ENCODE measurements at regions of chr19 and their contacts with region 1.

Region 1: GRCh38 chr19:52601025-52601973 is 31.2 kb downstream of the ZNF701 start:
- DNase-seq: peak; percentile 96
- ATAC-seq: peak; percentile 97 to 100 (median 98)
- H3K4me3 ChIP-seq: peak overlapping the region; percentile 76
- H3K27ac ChIP-seq: peak overlapping the region; percentile 38
- H3K4me1 ChIP-seq: peaks cover 5% of the 10 kb centered on the region
- H3K27me3 ChIP-seq: peaks cover 0 to 2% (median 0%) of the 10 kb centered on the region in 3 donors
- CTCF ChIP-seq: peak; percentile 44

Region 2: DNA sequence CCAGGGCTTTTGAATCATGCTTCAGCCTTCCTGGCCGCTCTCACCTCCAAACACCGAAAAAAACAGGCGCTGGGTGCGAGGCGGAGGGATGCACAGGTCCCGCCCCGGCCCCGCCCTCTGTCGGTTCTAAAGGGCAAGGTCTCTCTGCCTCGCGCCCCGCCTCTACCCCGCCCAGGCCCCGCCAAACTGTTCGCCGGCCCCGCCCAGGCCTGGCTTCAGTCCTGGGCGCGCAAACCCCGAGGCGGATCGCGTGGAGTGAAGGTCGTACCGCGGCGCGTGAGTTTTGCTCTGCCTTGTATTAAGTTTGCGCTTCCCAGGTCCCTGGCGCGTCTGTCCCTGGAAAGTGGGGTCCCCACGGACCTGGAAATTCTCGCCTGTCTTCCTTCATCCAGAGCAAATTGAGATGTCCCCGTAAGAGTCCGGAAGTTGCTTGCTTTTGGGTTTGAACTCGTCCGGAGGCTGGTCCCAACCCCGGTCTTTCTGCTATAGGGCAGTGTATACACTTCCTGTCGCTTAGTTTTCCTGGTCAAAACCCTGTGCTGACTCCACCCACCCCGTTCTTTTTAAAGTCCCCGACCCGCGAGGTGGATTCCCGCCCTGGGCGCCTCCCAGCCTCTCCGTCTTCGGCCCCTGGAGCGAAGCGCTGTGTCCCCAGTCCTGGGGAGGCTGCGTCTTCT is 65.4 kb before region 1 on chr19:
- intact Hi-C with region 1: loop called in 1 of 2 experiments (anchors 5 kb)
- DNase-seq: peak; percentile 91 to 93
- ATAC-seq: peak; percentile 90 to 93 (median 92)
- H3K4me3 ChIP-seq: peak overlapping the region; percentile 62
- H3K27ac ChIP-seq: peak overlapping the region; percentile 70
- H3K4me1 ChIP-seq: peaks cover 12% of the 10 kb centered on the region
- H3K27me3 ChIP-seq: no peaks in the 10 kb centered on the region
- CTCF ChIP-seq: peak; percentile 27

Region 3: GRCh38 chr19:52637718-52638585 is 36.7 kb after region 1 on chr19 and contains the start of gene ZNF83:
- intact Hi-C with region 1: loop called in 1 of 2 experiments (anchors 5 kb)
- DNase-seq: peak; percentile 96
- ATAC-seq: peak; percentile 95 to 100 (median 98)
- H3K4me3 ChIP-seq: peak within 1 kb of the TSS; percentile 78
- H3K27ac ChIP-seq: peak within 1 kb of the TSS; percentile 75
- H3K4me1 ChIP-seq: no peaks in the 10 kb centered on the region
- H3K27me3 ChIP-seq: peaks cover 0 to 11% (median 0%) of the 10 kb centered on the region in 3 donors
- CTCF ChIP-seq: no peak
- total RNA-seq, gene ZNF83: 3.9 to 11.5 (median 4.5) TPM

Measured in psoas muscle (tissue), 8 donors.